ENCODE measurements at regions of chr11 and their contacts with region 1.

Region 1: DNA sequence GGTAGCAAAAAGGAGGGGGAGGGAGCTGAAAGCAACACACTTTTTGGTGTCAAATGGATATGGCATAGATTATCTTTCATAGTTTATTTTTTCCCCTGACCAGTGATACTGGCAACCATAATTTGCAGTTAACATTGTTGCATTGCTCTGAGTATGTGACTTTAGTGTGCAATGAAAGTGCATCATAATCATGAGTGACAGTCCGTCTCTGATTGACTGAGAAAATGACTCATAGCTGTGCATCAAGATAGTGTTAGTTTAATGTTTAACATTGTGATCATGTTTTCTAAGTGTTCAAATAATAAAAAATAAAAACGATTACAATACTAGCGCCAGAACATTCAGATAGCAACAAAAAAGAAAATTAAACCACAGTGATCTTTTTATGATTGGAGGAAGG is 952.4 kb upstream of the TENM4 start:
- DNase-seq: no peak
- ATAC-seq: no peak
- H3K4me3 ChIP-seq: no peak overlapping the region
- H3K27ac ChIP-seq: no peak overlapping the region
- H3K4me1 ChIP-seq: no peaks in the 10 kb centered on the region
- H3K27me3 ChIP-seq: peaks cover 0 to 4% (median 0%) of the 10 kb centered on the region in 7 donors
- CTCF ChIP-seq: no peak

Region 2: DNA sequence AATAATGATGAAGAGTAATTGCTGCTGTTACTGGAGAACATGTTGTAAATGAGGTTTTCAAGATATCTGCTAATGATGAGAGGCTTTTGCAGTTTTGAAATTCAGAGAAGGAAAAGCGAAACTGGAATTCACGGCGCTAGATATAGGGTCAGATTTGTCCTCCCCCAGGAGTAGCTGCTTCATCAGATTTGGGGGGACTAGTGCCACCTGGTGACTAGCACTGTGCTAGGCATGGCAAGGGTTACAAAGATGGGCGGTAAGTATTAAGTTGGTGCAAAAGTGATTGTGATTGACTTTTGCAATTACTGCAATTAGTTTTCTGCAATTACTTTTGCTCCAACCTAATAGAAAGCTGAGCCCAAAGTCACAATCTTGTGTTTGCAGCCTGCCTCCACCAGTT is 72.4 kb before region 1 on chr11:
- intact Hi-C with region 1: no loop called
- DNase-seq: no peak
- ATAC-seq: no peak
- H3K4me3 ChIP-seq: no peak overlapping the region
- H3K27ac ChIP-seq: no peak overlapping the region
- H3K4me1 ChIP-seq: no peaks in the 10 kb centered on the region
- H3K27me3 ChIP-seq: no peaks in the 10 kb centered on the region
- CTCF ChIP-seq: no peak

Region 3: GRCh38 chr11:80613655-80614054 is 220.4 kb after region 1 on chr11:
- intact Hi-C with region 1: loop called in 1 of 10 experiments (anchors 5 kb)
- DNase-seq: no peak
- ATAC-seq: no peak
- H3K4me3 ChIP-seq: no peak overlapping the region
- H3K27ac ChIP-seq: no peak overlapping the region
- H3K4me1 ChIP-seq: no peaks in the 10 kb centered on the region
- H3K27me3 ChIP-seq: no peaks in the 10 kb centered on the region
- CTCF ChIP-seq: no peak